Mammary epithelial cell (primary cell): ENCODE measurements at regions of chr3 and their contacts with region 1.

Region 1: DNA sequence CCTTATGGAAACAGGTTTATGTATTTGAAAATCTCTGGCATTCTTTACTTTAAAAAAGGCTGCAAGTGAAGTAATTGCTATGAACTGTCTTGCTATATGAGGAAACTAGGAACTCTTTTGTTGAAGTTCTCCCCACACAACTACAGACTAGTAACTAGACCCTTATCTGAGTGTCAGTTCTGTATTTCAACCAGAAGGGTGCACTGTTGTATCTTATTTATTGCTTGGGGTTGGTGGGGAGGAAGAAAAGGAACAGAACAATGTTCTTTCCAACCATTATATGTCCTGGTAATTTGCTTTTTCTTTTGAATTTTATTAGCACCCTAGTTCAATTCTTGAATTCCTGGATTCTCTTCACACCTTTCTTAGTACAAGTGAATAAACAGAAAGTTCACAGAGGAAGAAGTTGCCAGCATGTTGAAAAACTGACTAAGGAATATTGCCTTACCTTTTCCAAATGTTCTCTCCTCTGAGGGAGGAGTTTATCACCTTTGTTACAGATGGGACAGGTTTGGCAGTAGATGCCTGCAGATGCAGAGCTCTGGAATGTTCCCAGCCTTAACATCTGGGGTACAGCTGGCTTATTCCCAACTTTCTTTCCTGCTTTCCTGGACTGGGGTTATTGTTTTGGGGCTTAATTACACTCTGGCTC is 162.4 kb upstream of the CFAP20DC start:
- DNase-seq: peak; percentile 62
- H3K4me3 ChIP-seq: no peak overlapping the region
- H3K27ac ChIP-seq: peak overlapping the region; percentile 40
- H3K4me1 ChIP-seq: peaks cover 12% of the 10 kb centered on the region
- H3K27me3 ChIP-seq: no peaks in the 10 kb centered on the region
- CTCF ChIP-seq: peak; percentile 68 to 72

Region 2: DNA sequence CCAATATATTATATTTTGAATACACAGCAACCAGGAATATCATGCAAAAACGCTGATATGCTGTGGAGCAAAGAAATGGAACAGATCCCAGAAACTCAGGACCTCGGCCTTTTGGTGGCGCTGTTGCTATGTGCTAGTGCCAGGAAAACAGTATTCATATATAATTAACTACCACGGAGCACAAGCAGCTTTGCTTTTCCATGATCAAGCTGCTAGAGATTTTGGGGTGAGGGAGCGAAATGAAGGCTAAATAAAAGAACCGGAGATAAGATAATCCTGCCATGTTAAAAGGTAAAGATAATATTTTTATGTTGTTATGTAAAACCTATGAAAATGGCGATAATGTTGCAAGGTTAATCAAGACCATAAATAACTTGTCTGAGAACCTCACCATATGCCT is 388.0 kb before region 1 on chr3:
- CTCF ChIA-PET with region 1: no interaction called
- dilution Hi-C with region 1: no loop called
- in situ Hi-C with region 1: no loop called
- intact Hi-C with region 1: loop called (anchors 2 kb)
- DNase-seq: peak; percentile 64
- H3K4me3 ChIP-seq: no peak overlapping the region
- H3K27ac ChIP-seq: no peak overlapping the region
- H3K4me1 ChIP-seq: peaks cover 5% of the 10 kb centered on the region
- H3K27me3 ChIP-seq: no peaks in the 10 kb centered on the region
- CTCF ChIP-seq: peak; percentile 85 to 86

Region 3: DNA sequence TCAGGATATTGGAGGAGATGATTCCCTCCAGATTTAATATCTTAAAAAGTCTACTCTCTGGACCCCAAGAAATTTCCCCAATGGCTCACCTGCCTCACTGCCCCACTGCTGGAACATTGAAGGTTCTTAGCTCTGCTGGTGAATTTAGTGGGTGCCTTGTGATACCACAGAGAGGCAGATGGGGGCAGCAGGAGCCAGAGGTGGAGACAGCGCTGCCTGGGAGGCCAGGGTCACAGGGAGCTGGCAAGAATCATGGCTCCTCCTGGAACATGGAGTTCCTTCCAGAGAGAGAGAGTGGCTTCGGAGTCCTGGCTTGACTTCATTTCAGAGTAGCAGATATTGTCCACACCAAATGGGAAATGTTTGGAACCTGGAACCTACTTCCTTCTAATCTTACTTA is 101.1 kb after region 1 on chr3:
- CTCF ChIA-PET with region 1: no interaction called
- dilution Hi-C with region 1: no loop called
- in situ Hi-C with region 1: no loop called
- intact Hi-C with region 1: loop called (anchors 1 kb)
- DNase-seq: peak; percentile 26
- H3K4me3 ChIP-seq: no peak overlapping the region
- H3K27ac ChIP-seq: no peak overlapping the region
- H3K4me1 ChIP-seq: peaks cover 15% of the 10 kb centered on the region
- H3K27me3 ChIP-seq: no peaks in the 10 kb centered on the region
- CTCF ChIP-seq: peak; percentile 59 to 78

Region 4: GRCh38 chr3:59444294-59444671 is 232.0 kb after region 1 on chr3:
- CTCF ChIA-PET with region 1: no interaction called
- dilution Hi-C with region 1: no loop called
- in situ Hi-C with region 1: no loop called
- intact Hi-C with region 1: loop called (anchors 5 kb)
- DNase-seq: no peak
- H3K4me3 ChIP-seq: no peak overlapping the region
- H3K27ac ChIP-seq: no peak overlapping the region
- H3K4me1 ChIP-seq: no peaks in the 10 kb centered on the region
- H3K27me3 ChIP-seq: no peaks in the 10 kb centered on the region
- CTCF ChIP-seq: no peak

Region 5: DNA sequence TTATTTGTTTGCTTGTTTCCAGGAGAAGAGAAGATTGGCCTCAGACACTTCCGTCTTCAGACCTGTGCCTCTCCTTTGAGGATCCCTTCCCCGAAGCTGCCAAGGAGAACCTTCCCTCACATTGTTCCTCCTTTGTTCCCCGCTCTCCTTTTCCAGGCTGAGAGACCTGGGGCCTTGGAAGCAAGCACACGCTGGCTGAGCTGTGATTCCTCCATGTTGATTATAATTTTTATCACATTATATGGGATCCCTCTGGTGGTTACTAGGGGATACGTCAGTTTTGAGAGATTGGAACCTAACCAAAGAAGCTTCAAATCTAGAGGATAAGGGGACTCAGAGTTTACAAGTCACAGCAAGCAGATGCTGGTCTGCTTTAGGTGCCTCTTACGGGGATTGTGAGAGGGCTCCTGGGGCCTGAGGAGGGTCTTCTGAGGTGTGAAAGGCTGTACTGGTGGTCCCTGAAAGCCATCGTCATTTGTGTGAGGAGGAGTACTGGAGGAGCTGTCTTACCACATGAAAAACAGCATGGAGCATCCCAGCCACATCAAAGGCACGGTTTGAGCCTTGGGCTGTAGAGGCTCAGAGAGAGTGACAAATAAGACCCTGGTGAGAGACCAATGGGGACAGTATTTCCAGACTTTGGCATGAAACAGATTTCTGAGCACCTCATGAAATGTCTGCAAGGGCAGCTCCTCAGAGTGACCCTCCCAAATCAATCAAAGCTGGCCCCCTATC is 597.6 kb after region 1 on chr3:
- CTCF ChIA-PET with region 1: no interaction called
- dilution Hi-C with region 1: no loop called
- in situ Hi-C with region 1: loop called in 1 of 2 experiments (anchors 25 kb)
- intact Hi-C with region 1: loop called (anchors 1 kb)
- DNase-seq: peak; percentile 34
- H3K4me3 ChIP-seq: no peak overlapping the region
- H3K27ac ChIP-seq: no peak overlapping the region
- H3K4me1 ChIP-seq: no peaks in the 10 kb centered on the region
- H3K27me3 ChIP-seq: no peaks in the 10 kb centered on the region
- CTCF ChIP-seq: peak; percentile 33 to 69